Posterior vena cava (tissue), 2 donors: ENCODE measurements at regions of chr17 and their contacts with region 1.

Region 1: GRCh38 chr17:10226930-10227685 is 28.7 kb upstream of the GAS7 start:
- DNase-seq: no peak

Region 2: DNA sequence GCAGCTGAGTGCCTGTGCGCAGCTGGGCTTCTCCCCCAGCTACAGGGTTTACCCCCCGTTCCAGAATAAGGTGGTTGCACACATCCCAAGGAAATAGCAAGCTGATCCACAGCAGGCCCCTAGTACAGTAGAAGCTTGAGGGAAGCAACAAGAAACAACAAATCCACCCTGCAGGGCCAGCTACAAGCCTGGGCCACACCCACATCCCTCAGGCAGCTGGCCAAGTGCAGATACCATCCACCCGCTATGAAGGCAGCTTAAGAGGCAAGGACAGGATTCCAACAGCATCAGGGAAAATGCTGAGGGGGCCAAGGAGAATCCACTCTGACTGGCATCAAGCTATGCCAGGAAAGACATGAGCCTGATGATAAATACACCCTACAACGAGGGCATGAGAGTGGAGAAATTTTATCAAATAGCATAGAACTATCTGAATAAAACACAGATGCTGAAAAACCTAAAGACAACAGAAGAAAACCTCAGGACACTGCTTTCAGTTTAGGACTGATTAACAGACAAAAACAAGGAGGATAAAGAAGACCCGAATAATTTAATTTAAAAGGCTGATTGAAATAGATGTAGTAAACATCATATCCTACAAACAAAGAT is 255.0 kb before region 1 on chr17:
- intact Hi-C with region 1: loop called in 1 of 2 experiments (anchors 10 kb)
- DNase-seq: peak; percentile 89

Region 3: GRCh38 chr17:9987779-9988574 is 239.1 kb before region 1 on chr17:
- intact Hi-C with region 1: loop called in 1 of 2 experiments (anchors 10 kb)
- DNase-seq: peak; percentile 78

Region 4: DNA sequence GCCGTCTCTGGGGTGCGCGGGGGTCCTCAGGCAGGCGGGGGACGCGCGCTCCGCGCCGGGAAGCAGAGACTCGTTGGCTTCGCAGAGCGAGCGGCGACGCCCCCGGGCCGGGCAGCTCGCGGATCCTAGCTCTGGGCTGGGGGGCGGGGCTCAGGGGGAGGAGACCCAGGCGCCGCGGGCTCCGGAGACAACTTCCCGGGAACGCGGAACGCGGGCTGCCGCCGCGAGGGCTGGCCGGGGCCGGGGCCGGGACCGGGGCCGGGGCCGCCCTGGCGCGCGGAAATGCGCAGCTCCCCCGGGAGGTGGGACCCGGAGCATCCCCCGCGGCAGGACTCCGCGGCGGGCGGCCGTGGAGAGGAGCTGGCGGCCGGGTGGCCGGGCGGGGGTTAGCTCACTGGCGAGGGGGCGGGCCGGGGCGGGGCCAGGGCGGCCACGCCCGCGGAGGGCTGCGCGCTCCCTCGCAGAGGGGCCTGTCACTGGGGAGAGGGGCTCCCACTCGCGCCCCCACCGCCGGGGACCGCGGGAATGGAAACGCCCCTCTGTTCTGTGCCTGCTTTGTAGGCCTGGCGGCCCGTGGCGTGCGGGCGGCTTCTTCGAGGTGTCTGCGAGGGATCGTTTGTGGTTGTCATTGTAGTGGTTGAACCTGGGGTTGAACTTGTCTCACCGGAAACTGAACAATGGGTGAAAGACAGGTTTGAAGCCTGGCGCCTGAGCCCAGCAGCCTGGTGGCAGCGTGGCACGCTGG is 28.4 kb before region 1 on chr17 and contains the start of gene GAS7:
- intact Hi-C with region 1: no loop called
- DNase-seq: peak; percentile 91
- total RNA-seq, gene GAS7: 70.6 to 190 TPM

Region 5: DNA sequence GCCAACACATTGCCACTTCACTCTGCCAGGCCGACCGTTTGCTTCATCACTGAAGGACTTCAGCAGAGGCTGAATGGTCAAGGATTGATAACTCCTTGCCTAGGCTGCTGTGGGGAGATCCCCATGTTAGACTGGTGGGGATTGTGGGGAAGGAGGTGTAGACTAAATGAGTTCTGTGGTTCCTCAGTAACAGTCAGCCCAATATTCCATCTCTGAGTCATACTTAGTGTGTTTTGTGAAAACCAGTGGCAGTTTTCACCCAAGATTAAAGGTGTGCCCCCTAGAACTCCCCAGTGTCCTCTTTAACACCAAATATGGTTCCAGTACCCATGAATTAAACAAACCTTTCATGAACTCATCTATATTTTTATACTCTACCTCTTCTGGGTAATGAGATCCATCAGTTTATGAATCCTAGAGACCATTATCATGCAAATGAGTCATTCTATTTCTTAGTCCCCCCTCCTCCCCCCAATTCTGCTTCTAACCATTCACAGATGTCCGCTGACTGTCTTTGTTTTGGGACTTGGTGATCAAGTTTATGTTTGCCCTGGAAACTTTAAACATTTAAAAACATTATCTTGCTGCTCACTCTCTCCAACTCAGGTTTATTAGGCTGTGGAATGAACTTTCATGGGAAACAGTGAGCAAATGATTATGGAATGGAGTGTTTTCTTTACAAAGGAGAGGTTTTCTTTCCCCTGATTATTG is 38.1 kb after region 1 on chr17:
- intact Hi-C with region 1: no loop called
- DNase-seq: no peak